ENCODE measurements at regions of chr14 and their contacts with region 1.

Region 1: DNA sequence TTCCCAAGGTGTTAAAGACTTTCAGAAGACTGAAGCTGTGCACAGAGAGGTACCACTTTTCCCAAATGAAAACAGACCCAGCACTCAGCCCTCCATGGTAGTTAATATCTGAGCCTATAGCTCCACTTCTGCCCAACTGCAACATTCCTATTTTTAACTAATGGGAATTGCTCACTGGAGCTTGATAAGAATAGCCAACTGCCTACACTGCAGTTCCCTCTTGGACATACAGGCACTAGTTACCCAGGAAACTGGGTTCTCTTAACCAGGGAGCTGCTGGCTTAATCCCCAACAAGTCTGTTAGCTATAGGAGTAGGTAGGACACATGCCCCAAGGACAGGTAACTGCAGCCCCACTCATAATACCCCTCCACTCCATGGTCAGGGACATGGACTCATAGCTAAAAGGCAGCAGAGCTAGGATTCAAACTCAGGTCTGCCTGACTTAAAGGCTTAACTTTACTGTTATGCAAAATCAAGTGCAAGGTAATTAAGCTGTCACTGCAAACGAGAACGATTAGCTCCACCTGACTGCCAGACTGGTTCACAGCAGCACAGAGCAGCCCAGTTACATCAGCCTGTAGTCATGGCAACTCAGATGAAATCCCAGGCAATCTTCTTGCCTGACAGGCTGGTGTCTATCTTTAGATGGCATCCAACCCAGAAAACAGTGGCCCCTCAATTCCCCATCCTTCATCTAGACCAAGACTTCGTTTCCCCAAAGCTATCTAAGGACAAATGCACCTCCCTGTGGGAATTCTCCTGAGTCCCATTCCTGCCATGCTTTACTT is 77.1 kb upstream of the ACTN1 start:
- DNase-seq: no peak
- ATAC-seq: peak; percentile 55

Region 2: GRCh38 chr14:68780358-68781160 is 275.6 kb before region 1 on chr14:
- intact Hi-C with region 1: no loop called
- DNase-seq: peak; percentile 83
- ATAC-seq: peak; percentile 77

Region 3: DNA sequence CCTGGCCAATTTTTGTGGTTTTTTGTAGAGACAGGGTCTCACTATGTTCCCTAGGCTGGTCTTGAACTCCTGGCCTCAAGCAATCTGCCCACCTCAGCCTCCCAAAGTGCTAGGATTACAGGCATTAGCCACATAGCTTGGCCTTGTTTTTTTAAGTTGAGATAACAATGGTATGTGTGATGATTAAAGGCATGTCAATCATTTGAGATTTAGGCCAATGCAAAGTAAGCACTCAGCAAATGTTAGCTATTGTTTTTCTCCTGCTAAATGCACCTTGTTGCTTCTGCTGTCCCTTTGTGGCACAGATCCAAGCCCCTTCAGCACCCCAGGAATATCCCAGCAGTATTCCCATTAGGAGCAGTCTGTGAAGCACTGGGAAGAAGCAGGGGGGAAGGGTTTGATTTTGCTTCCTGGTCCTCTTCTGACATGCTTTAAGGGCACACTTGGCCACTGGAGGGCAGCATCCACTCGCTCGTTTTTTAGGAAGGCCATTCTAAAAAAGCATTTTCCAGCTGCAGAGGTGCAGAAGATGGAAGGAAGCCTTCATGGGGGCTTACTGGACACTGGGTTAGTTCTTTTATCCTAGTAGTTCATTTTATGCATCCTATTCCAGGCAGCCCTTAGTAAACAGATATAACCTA is 193.1 kb before region 1 on chr14:
- intact Hi-C with region 1: loop called (anchors 1 kb)
- DNase-seq: peak; percentile 88
- ATAC-seq: peak; percentile 90

Measured in Right ventricle myocardium superior (tissue), 1 donor.